Activated T-helper 1 cell treated with anti-CD3 and anti-CD28 coated beads, Interleukin-12 subunit alpha, Interleukin-12 subunit beta, Interleukin-2, Interleukin-4 antibody, amounts not matched to agents 30 ng/mL and 10 ng/mL and 1 ng/mL, durations not matched to agents 14 hours and 24 hours and 36 hours (primary cell): ENCODE measurements at regions of chr10 and their contacts with region 1.

Region 1: DNA sequence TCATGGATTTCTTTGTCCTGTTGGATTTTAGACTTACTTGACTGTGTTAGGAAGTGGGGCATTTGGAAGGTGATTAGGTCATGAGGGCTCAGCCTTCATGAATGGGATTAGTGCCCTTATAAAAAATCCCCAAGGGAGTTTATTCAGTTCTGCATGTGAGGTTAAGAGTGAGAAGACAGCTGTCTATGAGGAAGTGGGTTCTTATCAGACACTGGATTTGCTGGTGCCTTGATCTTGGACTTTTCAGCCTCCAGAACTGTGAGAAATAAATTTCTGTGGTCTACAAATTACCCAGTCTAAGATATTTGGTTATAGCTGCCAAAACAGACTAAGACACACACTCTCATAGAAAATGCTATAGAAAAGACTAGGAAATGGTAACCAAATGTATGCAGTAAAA is 724.7 kb upstream of the FZD8 start:
- DNase-seq: no peak
- H3K4me3 Mint-ChIP-seq: no peak overlapping the region
- H3K27ac Mint-ChIP-seq: no peak overlapping the region
- H3K4me1 Mint-ChIP-seq: no peaks in the 10 kb centered on the region
- H3K27me3 Mint-ChIP-seq: no peaks in the 10 kb centered on the region

Region 2: DNA sequence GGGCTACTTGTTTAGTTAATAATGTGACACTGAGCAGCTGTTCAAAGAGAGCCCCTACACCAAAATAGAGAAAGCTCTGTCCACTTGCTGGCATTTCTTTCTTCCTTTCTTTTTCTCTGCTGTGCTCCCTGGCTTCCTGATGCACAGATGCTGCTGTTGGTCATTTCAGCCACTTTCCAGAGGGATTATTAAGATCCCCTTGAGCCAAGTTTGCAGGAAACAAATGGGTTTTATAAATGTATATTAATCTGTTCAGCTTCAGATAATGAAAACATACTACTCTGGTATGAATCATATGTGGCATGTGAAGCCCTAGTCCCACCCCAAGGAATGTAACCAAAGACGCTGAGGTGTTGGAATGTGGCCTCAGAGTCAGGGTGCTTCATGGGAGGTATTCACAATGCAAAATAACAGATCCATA is 86.5 kb before region 1 on chr10:
- intact Hi-C with region 1: no loop called
- DNase-seq: no peak
- H3K4me3 Mint-ChIP-seq: no peak overlapping the region
- H3K27ac Mint-ChIP-seq: no peak overlapping the region
- H3K4me1 Mint-ChIP-seq: no peaks in the 10 kb centered on the region
- H3K27me3 Mint-ChIP-seq: no peaks in the 10 kb centered on the region

Region 3: DNA sequence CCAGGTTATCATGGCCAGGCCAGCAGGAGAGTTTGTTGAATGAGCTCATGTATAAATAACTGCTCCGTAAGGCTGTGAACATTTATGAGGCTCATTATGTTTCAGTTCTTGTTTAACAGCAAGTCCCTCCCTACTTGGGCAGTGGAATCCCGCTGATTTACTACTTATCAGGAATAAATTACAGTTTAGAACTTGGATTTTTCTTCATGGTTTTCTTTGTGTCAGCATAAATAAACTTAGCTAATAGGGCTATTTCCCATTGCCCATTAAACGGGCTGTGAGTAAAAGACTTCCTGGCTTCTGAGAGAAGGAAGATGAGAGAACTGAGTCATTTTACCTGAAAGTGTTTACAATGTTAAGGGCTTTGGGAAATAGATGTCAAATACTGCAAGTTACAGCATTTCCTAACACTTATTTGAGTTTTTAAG is 57.0 kb after region 1 on chr10:
- intact Hi-C with region 1: loop called (anchors 10 kb)
- DNase-seq: no peak
- H3K4me3 Mint-ChIP-seq: no peak overlapping the region
- H3K27ac Mint-ChIP-seq: no peak overlapping the region
- H3K4me1 Mint-ChIP-seq: no peaks in the 10 kb centered on the region
- H3K27me3 Mint-ChIP-seq: no peaks in the 10 kb centered on the region

Region 4: DNA sequence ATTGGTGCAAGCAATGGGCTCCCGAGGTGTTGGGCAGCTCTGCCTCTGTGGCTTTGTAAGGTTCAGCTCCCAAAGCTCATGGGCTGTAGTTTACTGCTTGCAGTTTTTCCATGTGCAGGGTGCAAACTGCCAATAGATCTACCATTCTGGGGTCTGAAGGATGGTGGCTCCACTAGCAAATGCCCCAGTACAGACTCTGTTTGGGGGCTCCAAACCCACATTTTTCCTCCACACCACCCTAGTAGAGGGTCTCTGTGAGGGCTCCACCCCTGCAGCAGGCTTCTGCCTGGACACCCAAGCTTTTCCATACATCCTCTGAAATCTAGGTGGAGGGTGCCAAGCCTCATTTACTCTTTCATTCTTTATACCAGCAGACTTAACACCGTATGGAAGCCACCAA is 1709.8 kb after region 1 on chr10:
- intact Hi-C with region 1: no loop called
- DNase-seq: no peak
- H3K4me3 Mint-ChIP-seq: no peak overlapping the region
- H3K27ac Mint-ChIP-seq: no peak overlapping the region
- H3K4me1 Mint-ChIP-seq: no peaks in the 10 kb centered on the region
- H3K27me3 Mint-ChIP-seq: no peaks in the 10 kb centered on the region